ENCODE measurements at regions of chr6 and their contacts with region 1.

Region 1: DNA sequence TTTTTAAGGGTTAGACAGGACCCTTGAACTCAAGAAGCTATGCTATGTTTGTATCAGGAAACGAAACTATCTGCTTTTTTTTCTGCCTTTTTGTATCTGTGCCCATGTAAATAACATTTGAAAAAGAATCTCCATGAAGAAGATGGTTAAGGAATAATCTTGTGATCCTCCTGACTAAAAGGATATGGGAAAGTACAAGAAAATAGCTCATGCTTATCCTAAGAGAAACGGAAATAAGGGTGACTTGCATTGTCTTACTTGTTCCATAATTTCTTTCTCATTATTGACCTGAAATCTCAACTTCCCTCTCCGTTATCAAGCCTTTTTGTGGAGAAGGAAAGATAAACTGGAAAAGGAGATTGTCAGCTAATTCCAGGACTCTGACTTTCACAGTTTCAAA is 5.9 kb upstream of the CFAP206 start:
- DNase-seq: no peak
- H3K4me3 ChIP-seq: no peak overlapping the region
- H3K27ac ChIP-seq: no peak overlapping the region
- H3K4me1 ChIP-seq: no peaks in the 10 kb centered on the region
- H3K27me3 ChIP-seq: no peaks in the 10 kb centered on the region
- CTCF ChIP-seq: no peak
- POLR2A ChIP-seq: no peak

Region 2: GRCh38 chr6:87237804-87238203 is 164.0 kb before region 1 on chr6:
- intact Hi-C with region 1: no loop called
- DNase-seq: no peak
- H3K4me3 ChIP-seq: no peak overlapping the region
- H3K27ac ChIP-seq: no peak overlapping the region
- H3K4me1 ChIP-seq: no peaks in the 10 kb centered on the region
- H3K27me3 ChIP-seq: no peaks in the 10 kb centered on the region
- CTCF ChIP-seq: peak in 2 of 3 donors; percentile 22 to 45
- POLR2A ChIP-seq: no peak

Region 3: DNA sequence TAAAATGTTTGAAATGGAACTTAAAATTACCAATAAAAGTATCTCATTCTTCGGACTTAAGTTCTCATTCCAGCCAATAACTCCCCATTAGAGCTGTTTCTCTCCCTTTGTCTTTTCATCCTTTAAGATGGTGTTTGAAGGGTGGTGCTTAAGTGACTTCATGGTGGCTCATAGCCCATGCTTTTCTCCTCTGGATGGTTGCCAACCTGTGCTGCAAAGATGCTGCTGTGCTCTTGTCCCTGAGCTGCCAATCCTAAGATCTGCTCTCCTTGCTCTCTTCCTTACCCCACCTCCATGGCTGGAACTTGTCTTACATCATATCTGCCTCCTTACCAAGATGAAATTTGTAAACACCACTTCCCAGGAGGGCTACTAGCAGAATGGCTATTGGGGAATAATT is 1647.2 kb after region 1 on chr6:
- intact Hi-C with region 1: loop called (anchors 5 kb)
- DNase-seq: no peak
- H3K4me3 ChIP-seq: no peak overlapping the region
- H3K27ac ChIP-seq: peak overlapping the region in 1 of 2 donors; percentile 5
- H3K4me1 ChIP-seq: peaks cover 0 to 10% of the 10 kb centered on the region in 2 donors
- H3K27me3 ChIP-seq: no peaks in the 10 kb centered on the region
- CTCF ChIP-seq: no peak
- POLR2A ChIP-seq: no peak